H1 (cell line): ENCODE measurements at regions of chr5 and their contacts with region 1.

Region 1: GRCh38 chr5:81165493-81166119 is 67.5 kb upstream of the CKMT2 start:
- DNase-seq: peak; percentile 38 to 77
- H3K4me3 ChIP-seq: no peak overlapping the region
- H3K27ac ChIP-seq: no peak overlapping the region
- H3K4me1 ChIP-seq: no peaks in the 10 kb centered on the region
- H3K27me3 ChIP-seq: no peaks in the 10 kb centered on the region
- CTCF ChIP-seq: peak; percentile 85 to 96 (median 95)
- EP300 ChIP-seq: no peak
- POLR2A ChIP-seq: no peak
- RAD21 ChIP-seq: peak; percentile 93 to 96

Region 2: DNA sequence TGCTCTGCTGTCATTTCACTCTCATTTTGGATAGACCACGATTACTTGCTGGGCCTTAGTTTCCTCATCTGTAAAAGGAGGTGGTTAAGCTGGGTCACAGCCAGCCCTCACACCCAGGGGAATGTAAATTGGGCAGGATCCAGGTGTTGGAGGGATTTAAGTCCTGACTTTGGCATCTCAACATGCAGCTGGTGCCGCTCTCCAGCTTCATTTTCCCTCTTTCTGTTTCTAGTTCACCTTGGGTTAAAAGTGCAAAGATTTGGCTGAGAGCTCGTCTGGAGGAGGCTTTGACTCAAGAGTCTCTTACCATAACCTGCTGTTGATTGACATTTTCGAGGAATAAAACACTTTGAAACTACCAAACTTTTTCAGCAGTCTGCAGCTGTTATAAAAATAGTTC is 366.6 kb before region 1 on chr5:
- CTCF ChIA-PET with region 1: no interaction called
- POLR2A ChIA-PET with region 1: no interaction called
- DNase-seq: no peak
- H3K4me3 ChIP-seq: no peak overlapping the region
- H3K27ac ChIP-seq: no peak overlapping the region
- H3K4me1 ChIP-seq: no peaks in the 10 kb centered on the region
- H3K27me3 ChIP-seq: no peaks in the 10 kb centered on the region
- CTCF ChIP-seq: no peak
- EP300 ChIP-seq: no peak
- POLR2A ChIP-seq: no peak
- RAD21 ChIP-seq: no peak

Region 3: DNA sequence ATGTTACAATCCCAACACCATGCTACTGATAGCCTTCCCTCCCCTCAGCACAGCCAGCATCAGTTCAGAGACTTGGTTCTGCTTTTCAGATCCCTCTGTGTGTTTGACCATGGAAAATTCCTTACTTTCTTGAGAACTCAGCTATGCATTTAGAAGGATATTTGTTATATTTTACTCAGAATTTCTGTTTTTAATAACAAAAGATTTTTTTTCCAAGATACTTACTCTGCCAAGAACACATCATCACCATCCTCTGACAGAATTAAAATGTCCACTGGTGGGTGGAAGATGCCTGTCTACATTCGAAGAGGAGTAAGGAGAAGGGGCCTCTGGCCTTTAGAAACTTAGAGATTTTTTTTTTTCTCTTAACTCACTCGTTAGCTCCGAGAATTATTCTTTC is 11.5 kb after region 1 on chr5:
- CTCF ChIA-PET with region 1: interaction called, 26 read pairs
- POLR2A ChIA-PET with region 1: no interaction called
- DNase-seq: no peak
- H3K4me3 ChIP-seq: no peak overlapping the region
- H3K27ac ChIP-seq: no peak overlapping the region
- H3K4me1 ChIP-seq: peaks cover 2 to 11% (median 9%) of the 10 kb centered on the region in 4 experiments; a peak in 6 of 7 replicates
- H3K27me3 ChIP-seq: no peaks in the 10 kb centered on the region
- CTCF ChIP-seq: no peak
- EP300 ChIP-seq: no peak
- POLR2A ChIP-seq: no peak
- RAD21 ChIP-seq: no peak

Region 4: GRCh38 chr5:81239613-81240012 is 74.0 kb after region 1 on chr5:
- CTCF ChIA-PET with region 1: no interaction called
- POLR2A ChIA-PET with region 1: no interaction called
- DNase-seq: no peak
- H3K4me3 ChIP-seq: no peak overlapping the region
- H3K27ac ChIP-seq: no peak overlapping the region
- H3K4me1 ChIP-seq: peaks cover 0 to 3% (median under 1%) of the 10 kb centered on the region in 4 experiments; a peak in 1 of 7 replicates
- H3K27me3 ChIP-seq: no peaks in the 10 kb centered on the region
- CTCF ChIP-seq: peak in 1 of 3 experiments; percentile 1; a peak in 1 of 4 replicates
- EP300 ChIP-seq: no peak
- POLR2A ChIP-seq: no peak
- RAD21 ChIP-seq: no peak